ENCODE measurements at regions of chr1 and their contacts with region 1.

Region 1: DNA sequence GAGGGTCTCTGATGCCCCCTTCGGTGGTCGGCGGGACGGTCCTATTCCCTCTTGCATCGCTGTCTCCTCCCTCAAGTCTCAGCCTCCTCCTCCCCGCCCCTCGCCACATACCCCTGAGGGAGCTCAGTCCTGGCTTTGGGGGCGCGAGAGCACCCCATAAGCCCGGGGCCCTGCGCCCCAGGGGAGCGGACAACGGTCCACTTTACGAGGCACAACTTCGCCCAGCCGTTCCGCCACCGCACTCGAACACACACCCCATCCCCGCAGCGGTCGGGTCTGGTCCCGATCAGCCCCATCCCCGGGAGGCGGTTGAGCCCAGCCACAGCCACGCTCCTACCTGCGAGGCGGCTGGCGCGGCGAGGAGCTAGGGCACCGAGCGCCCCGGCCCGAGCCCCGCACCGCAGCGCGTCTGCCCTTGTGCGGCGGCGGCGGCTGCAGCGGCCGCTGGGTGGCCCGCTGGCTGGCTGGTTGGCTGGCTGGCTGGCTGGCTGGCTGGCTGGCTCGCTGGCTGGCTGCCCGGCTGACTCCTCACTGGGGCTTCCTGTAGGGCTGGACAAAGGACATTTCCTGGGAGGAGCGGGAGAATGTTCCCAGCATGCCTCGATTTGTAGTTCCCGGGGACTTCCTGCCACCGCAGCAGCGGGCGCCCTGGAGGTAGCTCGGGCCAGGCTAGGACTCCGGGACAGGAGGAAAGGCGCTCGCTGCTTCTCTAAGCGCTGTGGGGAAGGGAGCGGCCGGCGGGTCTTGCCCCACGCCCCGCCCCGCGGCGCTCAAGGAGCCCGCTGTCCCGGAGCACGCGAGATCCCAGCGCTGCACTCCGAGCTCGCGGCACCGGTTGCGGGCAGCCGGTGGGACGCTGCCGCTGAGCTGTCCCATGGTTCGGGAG is at the start of gene ZNF697:
- DNase-seq: peak; percentile 88 to 96 (median 91)
- ATAC-seq: peak; percentile 87
- H3K4me3 ChIP-seq: peak within 1 kb of the TSS; percentile 90
- H3K27ac ChIP-seq: peak within 1 kb of the TSS; percentile 71
- H3K4me1 ChIP-seq: peaks cover 15 to 25% of the 10 kb centered on the region in 2 experiments
- H3K27me3 ChIP-seq: peaks cover 10 to 19% of the 10 kb centered on the region in 2 experiments; a peak in 2 of 5 replicates
- CTCF ChIP-seq: peak in 2 of 3 experiments; percentile 32 to 35; a peak in 1 of 6 replicates
- EP300 ChIP-seq: no peak
- POLR2A ChIP-seq: peak; percentile 83
- RAD21 ChIP-seq: peak in 1 of 2 experiments; percentile 35; a peak in 2 of 4 replicates
- polyA plus RNA-seq, gene ZNF697: 2.1 TPM

Region 2: DNA sequence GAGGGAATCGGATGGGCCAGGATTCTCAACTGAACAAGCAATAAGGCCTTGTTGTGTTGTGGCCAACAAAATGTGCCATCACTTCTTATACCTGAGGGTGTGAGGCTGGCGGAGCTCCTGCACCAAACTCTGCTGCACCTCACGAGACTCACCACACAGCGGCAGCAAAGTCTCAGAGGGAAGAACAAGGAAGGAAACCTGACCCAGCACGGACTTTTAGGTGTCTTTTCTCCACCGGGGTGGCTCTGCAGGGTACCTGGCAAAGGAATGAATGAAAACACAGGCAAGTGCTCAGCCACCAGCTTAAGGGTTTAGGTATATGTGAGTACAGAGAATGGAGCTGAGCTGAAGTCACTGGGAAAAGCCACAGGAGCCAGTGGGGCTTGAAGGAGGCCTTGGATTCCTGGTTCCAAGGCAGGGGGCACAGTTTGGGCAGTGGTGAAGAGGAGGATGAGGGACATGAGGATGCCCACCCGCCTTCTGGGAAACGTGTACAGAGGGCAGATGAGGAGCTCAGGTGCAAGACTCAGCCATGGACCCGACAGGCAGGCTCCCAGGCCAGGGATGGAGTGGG is 172.0 kb before region 1 on chr1:
- CTCF ChIA-PET with region 1: no interaction called
- POLR2A ChIA-PET with region 1: no interaction called
- in situ Hi-C with region 1: no loop called
- intact Hi-C with region 1: no loop called
- DNase-seq: peak; percentile 50 to 64 (median 60)
- ATAC-seq: peak; percentile 97
- H3K4me3 ChIP-seq: no peak overlapping the region
- H3K27ac ChIP-seq: no peak overlapping the region
- H3K4me1 ChIP-seq: no peaks in the 10 kb centered on the region
- H3K27me3 ChIP-seq: no peaks in the 10 kb centered on the region
- CTCF ChIP-seq: peak; percentile 69 to 79 (median 78)
- EP300 ChIP-seq: no peak
- POLR2A ChIP-seq: no peak
- RAD21 ChIP-seq: peak; percentile 37 to 59; a peak in 3 of 4 replicates

Region 3: GRCh38 chr1:119549719-119550132 is 98.3 kb before region 1 on chr1:
- CTCF ChIA-PET with region 1: no interaction called
- POLR2A ChIA-PET with region 1: no interaction called
- in situ Hi-C with region 1: no loop called
- intact Hi-C with region 1: loop called (anchors 1 kb)
- DNase-seq: peak; percentile 26 to 81 (median 44)
- ATAC-seq: peak; percentile 99
- H3K4me3 ChIP-seq: no peak overlapping the region
- H3K27ac ChIP-seq: no peak overlapping the region
- H3K4me1 ChIP-seq: no peaks in the 10 kb centered on the region; a peak in 1 of 5 replicates
- H3K27me3 ChIP-seq: no peaks in the 10 kb centered on the region
- CTCF ChIP-seq: peak; percentile 67 to 79 (median 69)
- EP300 ChIP-seq: no peak
- POLR2A ChIP-seq: no peak
- RAD21 ChIP-seq: peak; percentile 61 to 76

Region 4: GRCh38 chr1:119637710-119638109 is 10.3 kb before region 1 on chr1:
- CTCF ChIA-PET with region 1: no interaction called
- POLR2A ChIA-PET with region 1: interaction called, 12 read pairs
- in situ Hi-C with region 1: no loop called
- intact Hi-C with region 1: no loop called
- DNase-seq: no peak
- ATAC-seq: no peak
- H3K4me3 ChIP-seq: no peak overlapping the region
- H3K27ac ChIP-seq: no peak overlapping the region
- H3K4me1 ChIP-seq: no peaks in the 10 kb centered on the region
- H3K27me3 ChIP-seq: no peaks in the 10 kb centered on the region
- CTCF ChIP-seq: no peak
- EP300 ChIP-seq: no peak
- POLR2A ChIP-seq: no peak
- RAD21 ChIP-seq: no peak

Region 5: GRCh38 chr1:119906927-119907652 is 259.1 kb after region 1 on chr1:
- CTCF ChIA-PET with region 1: no interaction called
- POLR2A ChIA-PET with region 1: no interaction called
- in situ Hi-C with region 1: no loop called
- intact Hi-C with region 1: no loop called
- DNase-seq: no peak
- ATAC-seq: no peak
- H3K4me3 ChIP-seq: no peak overlapping the region
- H3K27ac ChIP-seq: no peak overlapping the region
- H3K4me1 ChIP-seq: no peaks in the 10 kb centered on the region
- H3K27me3 ChIP-seq: peaks cover 10 to 39% of the 10 kb centered on the region in 2 experiments; a peak in 4 of 5 replicates
- CTCF ChIP-seq: no peak
- EP300 ChIP-seq: no peak
- POLR2A ChIP-seq: no peak
- RAD21 ChIP-seq: no peak